CD8-positive, alpha-beta T cell (primary cell): ENCODE measurements at regions of chr6 and their contacts with region 1.

Region 1: DNA sequence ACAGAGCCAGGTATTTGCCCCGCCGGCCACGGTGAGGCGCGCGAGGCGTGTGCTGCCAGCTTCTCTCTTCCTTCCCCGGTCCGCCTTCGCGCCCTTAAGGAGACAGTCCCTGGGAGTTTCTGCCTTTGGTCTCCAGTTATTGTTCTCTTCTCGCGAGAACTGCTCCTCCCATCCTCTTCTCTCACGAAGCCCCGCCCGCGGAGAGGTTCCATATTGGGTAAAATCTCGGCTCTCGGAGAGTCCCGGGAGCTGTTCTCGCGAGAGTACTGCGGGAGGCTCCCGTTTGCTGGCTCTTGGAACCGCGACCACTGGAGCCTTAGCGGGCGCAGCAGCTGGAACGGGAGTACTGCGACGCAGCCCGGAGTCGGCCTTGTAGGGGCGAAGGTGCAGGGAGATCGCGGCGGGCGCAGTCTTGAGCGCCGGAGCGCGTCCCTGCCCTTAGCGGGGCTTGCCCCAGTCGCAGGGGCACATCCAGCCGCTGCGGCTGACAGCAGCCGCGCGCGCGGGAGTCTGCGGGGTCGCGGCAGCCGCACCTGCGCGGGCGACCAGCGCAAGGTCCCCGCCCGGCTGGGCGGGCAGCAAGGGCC is at the start of gene MAPK14:
- DNase-seq: peak; percentile 94 to 100 (median 98)
- ATAC-seq: peak; percentile 88
- H3K4me3 ChIP-seq: peak within 1 kb of the TSS; percentile 85 to 99
- H3K4me3 Mint-ChIP-seq: peak within 1 kb of the TSS; percentile 90
- H3K27ac ChIP-seq: peak within 1 kb of the TSS; percentile 72 to 73
- H3K27ac Mint-ChIP-seq: peak within 1 kb of the TSS; percentile 95
- H3K4me1 ChIP-seq: peaks cover 14% of the 10 kb centered on the region
- H3K4me1 Mint-ChIP-seq: peaks cover 42% of the 10 kb centered on the region
- H3K27me3 ChIP-seq: peaks cover 0 to 2% of the 10 kb centered on the region in 2 experiments
- H3K27me3 Mint-ChIP-seq: peaks cover 18% of the 10 kb centered on the region
- CTCF ChIP-seq: peak; percentile 87
- total RNA-seq, gene MAPK14: 34.5 to 34.9 TPM

Region 2: DNA sequence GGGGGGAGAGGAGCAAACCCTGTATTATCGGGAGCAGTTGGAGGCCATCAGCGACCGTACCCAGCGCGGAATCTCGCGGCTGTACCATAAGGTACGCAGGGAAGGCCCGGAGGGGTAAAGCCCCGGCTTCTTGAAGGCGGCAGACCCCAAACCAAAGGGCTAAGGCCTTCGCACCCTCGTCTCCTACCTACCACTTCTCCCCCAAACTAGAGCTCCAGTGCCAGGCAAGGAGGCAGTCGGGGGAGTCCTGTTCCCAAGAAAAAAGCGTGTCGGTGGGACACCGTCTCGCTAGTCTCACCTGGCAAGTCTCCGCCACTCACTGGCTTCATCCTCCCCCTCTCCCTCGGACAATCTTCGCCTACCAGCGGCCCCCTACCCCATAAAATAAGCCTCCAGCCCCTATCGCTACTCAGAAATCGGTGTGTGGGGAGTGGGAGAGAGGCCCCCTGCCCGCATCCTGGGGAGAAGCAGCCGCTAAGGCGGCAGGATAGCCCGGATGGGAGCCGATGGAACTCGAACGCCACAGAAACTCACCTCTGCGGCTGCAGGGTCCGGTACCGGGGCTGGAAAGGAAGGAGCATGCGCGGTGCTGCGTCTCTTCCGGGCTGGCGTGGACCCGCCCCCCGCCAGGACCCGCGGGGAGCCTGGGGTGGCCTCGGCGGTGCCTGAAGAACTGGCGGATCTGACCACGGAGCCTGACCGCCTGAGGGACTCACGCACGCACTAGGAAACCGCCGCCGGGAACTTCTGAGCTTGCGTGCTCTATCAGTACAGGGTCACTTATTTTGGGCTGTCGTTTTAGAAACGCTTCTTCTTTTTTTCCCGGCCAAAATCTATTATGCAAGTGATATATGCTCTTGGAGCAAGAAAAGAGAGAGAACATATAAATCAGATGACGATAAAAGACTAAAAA is 1601.8 kb before region 1 on chr6 and contains the start of gene RPS10:
- CTCF ChIA-PET with region 1: no interaction called
- POLR2A ChIA-PET with region 1: no interaction called
- intact Hi-C with region 1: loop called in 1 of 2 experiments (anchors 10 kb)
- DNase-seq: peak; percentile 79 to 95 (median 89)
- ATAC-seq: peak; percentile 98
- H3K4me3 ChIP-seq: peak within 1 kb of the TSS; percentile 78 to 96
- H3K4me3 Mint-ChIP-seq: peak within 1 kb of the TSS; percentile 96
- H3K27ac ChIP-seq: peak within 1 kb of the TSS; percentile 90 to 95
- H3K27ac Mint-ChIP-seq: peak within 1 kb of the TSS; percentile 97
- H3K4me1 ChIP-seq: peaks cover 23% of the 10 kb centered on the region
- H3K4me1 Mint-ChIP-seq: peaks cover 36% of the 10 kb centered on the region
- H3K27me3 ChIP-seq: no peaks in the 10 kb centered on the region
- H3K27me3 Mint-ChIP-seq: no peaks in the 10 kb centered on the region
- CTCF ChIP-seq: no peak
- total RNA-seq, gene RPS10: 2,721 to 2,770 TPM

Region 3: DNA sequence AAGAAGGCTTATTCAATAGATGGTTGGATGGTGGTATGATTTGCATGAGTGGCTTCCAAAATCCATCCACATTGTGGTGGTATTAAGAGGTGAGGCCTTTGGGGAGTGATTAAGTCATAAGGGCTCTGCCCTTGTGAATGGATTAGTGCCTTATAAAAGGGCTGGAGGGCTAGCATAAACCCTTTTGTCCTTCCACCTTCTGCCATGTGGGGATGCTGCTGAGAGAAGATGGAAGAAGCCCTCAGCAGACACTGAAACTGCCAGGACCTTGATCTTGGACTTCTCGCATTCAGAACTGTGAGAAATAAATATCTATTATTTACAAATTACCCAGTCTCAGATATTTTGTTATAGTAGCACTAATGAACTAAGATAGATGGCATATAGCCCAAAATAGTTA is 78.9 kb before region 1 on chr6:
- CTCF ChIA-PET with region 1: no interaction called
- POLR2A ChIA-PET with region 1: no interaction called
- intact Hi-C with region 1: no loop called
- DNase-seq: no peak
- ATAC-seq: no peak
- H3K4me3 ChIP-seq: no peak overlapping the region
- H3K4me3 Mint-ChIP-seq: no peak overlapping the region
- H3K27ac ChIP-seq: no peak overlapping the region
- H3K27ac Mint-ChIP-seq: no peak overlapping the region
- H3K4me1 ChIP-seq: no peaks in the 10 kb centered on the region
- H3K4me1 Mint-ChIP-seq: no peaks in the 10 kb centered on the region
- H3K27me3 ChIP-seq: no peaks in the 10 kb centered on the region
- H3K27me3 Mint-ChIP-seq: no peaks in the 10 kb centered on the region
- CTCF ChIP-seq: no peak

Region 4: DNA sequence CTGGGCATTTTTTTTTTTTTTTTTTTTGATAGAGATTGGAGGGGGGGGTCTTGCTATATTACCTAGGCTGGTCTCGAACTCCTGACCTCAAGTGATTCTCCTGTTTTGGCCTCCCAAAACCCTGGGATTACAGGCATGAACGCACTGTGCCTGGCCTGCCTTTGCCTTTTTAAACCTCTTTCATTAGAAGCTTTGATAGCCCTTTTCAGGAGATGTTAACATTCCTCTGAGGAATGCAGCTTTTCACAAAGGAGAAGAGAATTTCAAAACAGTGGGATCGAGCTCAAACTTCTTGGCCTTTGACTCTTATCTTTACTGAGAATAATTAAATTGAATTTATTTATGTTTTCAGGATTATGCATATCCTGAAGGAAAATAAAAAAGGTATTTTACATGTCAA is 34.4 kb before region 1 on chr6:
- CTCF ChIA-PET with region 1: no interaction called
- POLR2A ChIA-PET with region 1: no interaction called
- intact Hi-C with region 1: no loop called
- DNase-seq: no peak
- ATAC-seq: no peak
- H3K4me3 ChIP-seq: no peak overlapping the region
- H3K4me3 Mint-ChIP-seq: no peak overlapping the region
- H3K27ac ChIP-seq: no peak overlapping the region
- H3K27ac Mint-ChIP-seq: no peak overlapping the region
- H3K4me1 ChIP-seq: no peaks in the 10 kb centered on the region
- H3K4me1 Mint-ChIP-seq: no peaks in the 10 kb centered on the region
- H3K27me3 ChIP-seq: peaks cover 0 to 3% of the 10 kb centered on the region in 2 experiments
- H3K27me3 Mint-ChIP-seq: peaks cover 8% of the 10 kb centered on the region
- CTCF ChIP-seq: no peak

Region 5: GRCh38 chr6:36067374-36068011 is 39.9 kb after region 1 on chr6:
- CTCF ChIA-PET with region 1: interaction called, 3 read pairs
- POLR2A ChIA-PET with region 1: interaction called, 3 read pairs
- intact Hi-C with region 1: loop called in 1 of 2 experiments (anchors 5 kb)
- DNase-seq: no peak
- ATAC-seq: no peak
- H3K4me3 ChIP-seq: no peak overlapping the region
- H3K4me3 Mint-ChIP-seq: no peak overlapping the region
- H3K27ac ChIP-seq: no peak overlapping the region
- H3K27ac Mint-ChIP-seq: peak overlapping the region; percentile 38
- H3K4me1 ChIP-seq: peaks cover 15% of the 10 kb centered on the region
- H3K4me1 Mint-ChIP-seq: peaks cover 64% of the 10 kb centered on the region
- H3K27me3 ChIP-seq: no peaks in the 10 kb centered on the region
- H3K27me3 Mint-ChIP-seq: no peaks in the 10 kb centered on the region
- CTCF ChIP-seq: no peak

Region 6: GRCh38 chr6:36109092-36109491 is 81.5 kb after region 1 on chr6:
- CTCF ChIA-PET with region 1: interaction called, 10 read pairs
- POLR2A ChIA-PET with region 1: interaction called, 10 read pairs
- intact Hi-C with region 1: no loop called
- DNase-seq: peak in 5 of 9 experiments; percentile 44 to 81 (median 66)
- ATAC-seq: peak; percentile 93
- H3K4me3 ChIP-seq: no peak overlapping the region
- H3K4me3 Mint-ChIP-seq: peak overlapping the region; percentile 8
- H3K27ac ChIP-seq: peak overlapping the region; percentile 59 to 60
- H3K27ac Mint-ChIP-seq: peak overlapping the region; percentile 95
- H3K4me1 ChIP-seq: peaks cover 53% of the 10 kb centered on the region
- H3K4me1 Mint-ChIP-seq: peaks cover 60% of the 10 kb centered on the region
- H3K27me3 ChIP-seq: no peaks in the 10 kb centered on the region
- H3K27me3 Mint-ChIP-seq: no peaks in the 10 kb centered on the region
- CTCF ChIP-seq: no peak

Region 7: DNA sequence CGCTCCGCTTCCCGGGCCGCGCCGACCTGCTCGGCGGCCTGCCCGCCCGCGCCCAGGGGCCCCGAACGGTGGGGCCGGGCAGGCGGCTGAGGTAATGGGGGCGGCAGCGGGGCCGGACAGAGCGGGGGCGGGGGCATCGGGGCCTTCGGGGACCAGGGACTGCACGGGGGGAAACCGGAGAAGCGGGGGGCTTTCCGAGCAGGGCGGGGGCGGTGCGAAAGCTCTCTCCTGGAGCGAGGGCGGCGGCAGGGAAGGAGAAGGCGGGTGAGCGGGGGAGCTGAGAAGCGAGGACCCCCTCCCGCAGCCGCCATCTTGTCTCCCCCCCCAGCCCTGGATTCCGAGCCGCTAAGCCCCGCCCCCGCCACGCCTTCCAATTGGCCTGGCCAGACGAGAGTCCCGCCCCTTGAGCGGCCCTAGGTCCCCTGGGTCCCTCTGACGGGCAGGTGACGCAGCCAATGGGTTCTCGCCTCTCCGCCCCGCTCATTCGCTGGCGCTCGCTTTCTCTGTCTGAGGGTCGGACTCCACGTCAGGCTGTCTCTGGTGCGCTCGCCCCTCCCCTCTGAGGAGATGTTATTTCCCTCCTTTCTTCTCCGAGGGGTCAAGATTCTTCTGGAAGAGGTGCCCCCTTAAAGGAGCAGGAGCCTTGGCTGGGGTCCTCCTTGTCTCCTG is 169.4 kb after region 1 on chr6:
- CTCF ChIA-PET with region 1: interaction called, 4 read pairs
- POLR2A ChIA-PET with region 1: interaction called, 11 read pairs
- intact Hi-C with region 1: loop called (anchors 1 kb)
- DNase-seq: peak; percentile 99 to 100 (median 100)
- ATAC-seq: peak; percentile 91
- H3K4me3 ChIP-seq: peak overlapping the region; percentile 61 to 68
- H3K4me3 Mint-ChIP-seq: peak overlapping the region; percentile 88
- H3K27ac ChIP-seq: peak overlapping the region; percentile 74 to 77
- H3K27ac Mint-ChIP-seq: peak overlapping the region; percentile 94
- H3K4me1 ChIP-seq: peaks cover 29% of the 10 kb centered on the region
- H3K4me1 Mint-ChIP-seq: peaks cover 55% of the 10 kb centered on the region
- H3K27me3 ChIP-seq: no peaks in the 10 kb centered on the region
- H3K27me3 Mint-ChIP-seq: no peaks in the 10 kb centered on the region
- CTCF ChIP-seq: no peak

Region 8: GRCh38 chr6:36235309-36235708 is 207.7 kb after region 1 on chr6:
- CTCF ChIA-PET with region 1: no interaction called
- POLR2A ChIA-PET with region 1: no interaction called
- intact Hi-C with region 1: no loop called
- DNase-seq: no peak
- ATAC-seq: no peak
- H3K4me3 ChIP-seq: no peak overlapping the region
- H3K4me3 Mint-ChIP-seq: no peak overlapping the region
- H3K27ac ChIP-seq: no peak overlapping the region
- H3K27ac Mint-ChIP-seq: peak overlapping the region; percentile 14
- H3K4me1 ChIP-seq: no peaks in the 10 kb centered on the region
- H3K4me1 Mint-ChIP-seq: peaks cover 3% of the 10 kb centered on the region
- H3K27me3 ChIP-seq: no peaks in the 10 kb centered on the region
- H3K27me3 Mint-ChIP-seq: no peaks in the 10 kb centered on the region
- CTCF ChIP-seq: no peak

Region 9: GRCh38 chr6:36360241-36361054 is 332.9 kb after region 1 on chr6:
- CTCF ChIA-PET with region 1: interaction called, 18 read pairs
- POLR2A ChIA-PET with region 1: interaction called, 3 read pairs
- intact Hi-C with region 1: loop called (anchors 1 kb)
- DNase-seq: peak; percentile 38 to 81 (median 69)
- ATAC-seq: peak; percentile 93
- H3K4me3 ChIP-seq: no peak overlapping the region
- H3K4me3 Mint-ChIP-seq: no peak overlapping the region
- H3K27ac ChIP-seq: no peak overlapping the region
- H3K27ac Mint-ChIP-seq: no peak overlapping the region
- H3K4me1 ChIP-seq: peaks cover 4% of the 10 kb centered on the region
- H3K4me1 Mint-ChIP-seq: peaks cover 11% of the 10 kb centered on the region
- H3K27me3 ChIP-seq: no peaks in the 10 kb centered on the region
- H3K27me3 Mint-ChIP-seq: peaks cover 3% of the 10 kb centered on the region
- CTCF ChIP-seq: peak; percentile 74

Region 10: DNA sequence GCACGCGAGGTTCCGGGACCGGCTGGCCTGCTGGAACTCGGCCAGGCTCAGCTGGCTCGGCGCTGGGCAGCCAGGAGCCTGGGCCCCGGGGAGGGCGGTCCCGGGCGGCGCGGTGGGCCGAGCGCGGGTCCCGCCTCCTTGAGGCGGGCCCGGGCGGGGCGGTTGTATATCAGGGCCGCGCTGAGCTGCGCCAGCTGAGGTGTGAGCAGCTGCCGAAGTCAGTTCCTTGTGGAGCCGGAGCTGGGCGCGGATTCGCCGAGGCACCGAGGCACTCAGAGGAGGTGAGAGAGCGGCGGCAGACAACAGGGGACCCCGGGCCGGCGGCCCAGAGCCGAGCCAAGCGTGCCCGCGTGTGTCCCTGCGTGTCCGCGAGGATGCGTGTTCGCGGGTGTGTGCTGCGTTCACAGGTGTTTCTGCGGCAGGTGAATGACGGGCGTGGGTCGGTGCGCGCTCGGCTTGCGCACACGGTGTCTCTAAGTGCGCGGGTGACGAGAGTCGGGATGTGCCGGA is 651.0 kb after region 1 on chr6 and contains the start of gene CDKN1A:
- CTCF ChIA-PET with region 1: no interaction called
- POLR2A ChIA-PET with region 1: no interaction called
- intact Hi-C with region 1: loop called in 1 of 2 experiments (anchors 5 kb)
- DNase-seq: peak; percentile 28 to 87 (median 73)
- ATAC-seq: peak; percentile 45
- H3K4me3 ChIP-seq: peak within 1 kb of the TSS; percentile 77 to 78
- H3K4me3 Mint-ChIP-seq: peak within 1 kb of the TSS; percentile 92
- H3K27ac ChIP-seq: no peak within 1 kb of the TSS
- H3K27ac Mint-ChIP-seq: peak within 1 kb of the TSS; percentile 87
- H3K4me1 ChIP-seq: peaks cover 25% of the 10 kb centered on the region
- H3K4me1 Mint-ChIP-seq: peaks cover 25% of the 10 kb centered on the region
- H3K27me3 ChIP-seq: peaks cover 0 to 10% of the 10 kb centered on the region in 2 experiments
- H3K27me3 Mint-ChIP-seq: peaks cover 3% of the 10 kb centered on the region
- CTCF ChIP-seq: no peak
- total RNA-seq, gene CDKN1A: 71.3 to 78.7 TPM